Adrenal gland (tissue), 19 donors: ENCODE measurements at regions of chr3 and their contacts with region 1.

Region 1: DNA sequence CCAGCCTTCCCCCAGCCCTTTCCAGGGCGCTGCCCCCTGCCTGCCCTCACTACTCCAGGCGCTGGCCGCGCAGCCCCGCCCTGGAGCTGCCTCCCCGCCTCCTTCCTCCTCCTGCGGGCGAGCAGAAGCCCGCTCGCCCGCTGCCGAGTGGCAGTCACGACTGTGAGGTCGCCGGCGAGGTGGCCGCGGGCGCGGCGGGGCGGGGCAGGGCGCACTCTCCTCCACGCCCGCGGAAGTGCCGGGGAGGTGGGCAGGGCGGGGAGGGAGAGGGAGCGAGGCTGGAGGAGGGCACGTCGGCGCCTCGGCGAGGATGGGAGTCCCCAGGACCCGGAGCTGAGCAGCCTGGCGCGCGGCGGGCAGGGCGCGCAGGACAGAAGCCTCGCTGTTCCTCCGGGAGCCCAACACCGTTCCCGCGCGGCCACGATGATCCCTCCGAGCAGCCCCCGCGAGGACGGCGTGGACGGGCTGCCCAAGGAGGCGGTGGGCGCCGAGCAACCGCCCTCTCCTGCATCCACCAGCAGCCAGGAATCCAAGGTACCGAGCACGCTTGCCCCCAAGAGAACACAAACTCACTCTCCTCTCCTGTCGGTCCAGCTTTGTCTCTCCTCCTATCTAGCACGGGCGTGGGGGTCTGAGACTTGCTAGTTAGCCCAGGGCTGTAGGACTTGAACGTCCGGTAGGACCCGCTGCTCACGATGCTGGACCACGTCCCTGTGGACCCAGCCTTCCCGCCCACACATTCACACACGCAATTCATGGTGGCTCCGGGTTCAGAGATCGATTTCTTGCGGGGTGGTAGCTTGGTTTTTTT is at the start of gene STAC:
- DNase-seq: peak; percentile 25 to 70 (median 49)
- H3K4me3 ChIP-seq: peak within 1 kb of the TSS in 2 of 4 donors; percentile 15 to 70
- H3K27ac ChIP-seq: peak within 1 kb of the TSS in 1 of 5 donors; percentile 42
- H3K4me1 ChIP-seq: peaks cover 4 to 10% of the 10 kb centered on the region in 2 donors
- H3K27me3 ChIP-seq: peaks cover 5% of the 10 kb centered on the region
- CTCF ChIP-seq: no peak
- POLR2A ChIP-seq: peak; percentile 14 to 27
- total RNA-seq, gene STAC: 2.2 to 12.0 (median 3.5) TPM

Region 2: GRCh38 chr3:36408146-36408545 is 27.7 kb after region 1 on chr3:
- intact Hi-C with region 1: loop called in 1 of 2 experiments (anchors 2 kb)
- DNase-seq: no peak
- H3K4me3 ChIP-seq: no peak overlapping the region
- H3K27ac ChIP-seq: no peak overlapping the region
- H3K4me1 ChIP-seq: no peaks in the 10 kb centered on the region
- H3K27me3 ChIP-seq: no peaks in the 10 kb centered on the region
- CTCF ChIP-seq: no peak
- POLR2A ChIP-seq: no peak

Region 3: GRCh38 chr3:36494461-36495109 is 114.2 kb after region 1 on chr3:
- intact Hi-C with region 1: no loop called
- DNase-seq: peak in 3 of 7 donors; percentile 11 to 32 (median 13)
- H3K4me3 ChIP-seq: no peak overlapping the region
- H3K27ac ChIP-seq: no peak overlapping the region
- H3K4me1 ChIP-seq: peaks cover 0 to 5% of the 10 kb centered on the region in 2 donors
- H3K27me3 ChIP-seq: no peaks in the 10 kb centered on the region
- CTCF ChIP-seq: no peak
- POLR2A ChIP-seq: no peak